Right ventricle myocardium inferior (tissue), 1 donor: ENCODE measurements at regions of chr18 and their contacts with region 1.

Region 1: GRCh38 chr18:50878345-50879301 is at the start of gene ME2:
- DNase-seq: peak; percentile 96
- ATAC-seq: peak; percentile 98
- total RNA-seq, gene ME2: 88.2 TPM

Region 2: DNA sequence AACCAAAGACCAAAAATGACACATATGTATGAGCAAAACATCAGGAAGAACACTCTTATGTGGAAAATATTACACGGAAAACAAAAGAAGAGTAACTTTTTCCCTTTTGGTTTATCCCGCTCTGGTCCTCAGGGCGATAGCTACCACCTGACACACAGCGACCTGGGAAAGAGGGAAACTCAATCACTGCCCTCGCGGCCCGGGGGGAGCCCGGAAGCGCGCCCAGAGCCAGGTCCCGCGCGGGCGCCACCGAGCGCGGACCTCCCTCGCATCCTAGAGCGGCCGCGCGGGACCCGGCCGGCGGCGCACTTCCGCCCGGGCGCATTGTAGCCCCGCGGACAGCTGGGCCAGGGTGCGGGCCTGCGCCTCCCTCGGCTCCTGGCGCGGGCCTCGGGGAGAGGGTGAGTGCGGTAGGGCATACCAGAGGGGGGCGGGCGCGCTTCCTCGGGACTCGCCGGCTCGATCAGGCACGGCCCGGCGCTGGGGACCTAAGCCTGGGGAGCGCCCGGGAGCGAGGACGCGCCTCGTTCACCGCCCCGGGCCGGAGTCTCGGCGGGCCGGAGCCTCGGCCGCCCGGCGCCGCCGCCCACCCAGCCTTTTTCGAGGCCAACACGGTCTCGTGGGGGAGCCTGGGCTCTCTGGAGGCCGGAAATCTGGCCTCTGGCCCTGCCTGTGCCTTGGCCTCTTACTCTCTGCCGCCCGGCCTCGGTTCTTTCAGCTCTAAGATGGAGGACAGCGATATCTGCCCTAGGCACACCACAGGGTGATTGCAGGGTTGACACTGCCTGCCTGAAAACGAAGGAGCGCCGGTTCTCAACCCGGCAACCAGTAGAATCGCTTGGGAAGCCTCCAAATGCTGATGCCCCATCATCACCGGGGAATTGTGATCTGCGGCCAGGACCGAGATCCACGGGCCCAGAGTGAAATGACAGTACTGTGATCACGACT is 89.4 kb after region 1 on chr18 and contains the start of gene ELAC1:
- intact Hi-C with region 1: loop called (anchors 1 kb)
- DNase-seq: peak; percentile 90
- ATAC-seq: peak; percentile 98
- total RNA-seq, gene ELAC1: 5.6 TPM

Region 3: GRCh38 chr18:51039138-51040112 is 160.8 kb after region 1 on chr18:
- intact Hi-C with region 1: loop called (anchors 5 kb)
- DNase-seq: no peak
- ATAC-seq: no peak